ENCODE measurements at regions of chr15 and their contacts with region 1.

Region 1: GRCh38 chr15:68783226-68784058 is 37.3 kb downstream of the ANP32A start:
- DNase-seq: no peak
- H3K4me3 ChIP-seq: no peak overlapping the region
- CTCF ChIP-seq: peak; percentile 66

Region 2: DNA sequence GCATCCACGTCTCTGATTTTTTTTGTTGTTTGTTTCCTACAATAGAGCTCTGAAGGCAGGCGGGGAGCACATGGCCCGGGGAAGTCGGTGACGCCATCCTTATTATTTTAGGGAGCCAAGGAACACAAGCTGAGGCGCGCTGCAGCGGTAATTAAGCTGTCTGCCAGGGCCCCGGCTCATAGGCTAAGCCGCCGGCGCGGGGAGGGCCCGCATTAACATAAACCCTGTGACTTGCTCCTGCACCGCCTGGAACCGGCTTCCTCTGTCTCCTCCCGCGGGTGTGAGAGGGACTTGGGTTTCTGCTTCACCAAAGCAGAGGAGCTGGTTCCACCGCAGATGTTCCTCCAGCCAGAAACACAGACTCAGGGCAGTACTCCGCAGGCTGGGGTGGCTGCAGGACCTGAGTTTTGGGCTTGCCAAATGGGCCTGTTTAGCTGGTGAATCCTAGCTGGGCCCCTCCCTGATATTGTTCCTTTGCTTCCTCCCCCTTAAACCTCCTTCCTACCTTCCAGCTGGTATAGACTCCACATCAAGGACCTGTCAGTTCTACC is 11.9 kb after region 1 on chr15:
- CTCF ChIA-PET with region 1: interaction called, 19 read pairs
- POLR2A ChIA-PET with region 1: no interaction called
- DNase-seq: peak; percentile 31
- H3K4me3 ChIP-seq: no peak overlapping the region
- CTCF ChIP-seq: no peak

Region 3: DNA sequence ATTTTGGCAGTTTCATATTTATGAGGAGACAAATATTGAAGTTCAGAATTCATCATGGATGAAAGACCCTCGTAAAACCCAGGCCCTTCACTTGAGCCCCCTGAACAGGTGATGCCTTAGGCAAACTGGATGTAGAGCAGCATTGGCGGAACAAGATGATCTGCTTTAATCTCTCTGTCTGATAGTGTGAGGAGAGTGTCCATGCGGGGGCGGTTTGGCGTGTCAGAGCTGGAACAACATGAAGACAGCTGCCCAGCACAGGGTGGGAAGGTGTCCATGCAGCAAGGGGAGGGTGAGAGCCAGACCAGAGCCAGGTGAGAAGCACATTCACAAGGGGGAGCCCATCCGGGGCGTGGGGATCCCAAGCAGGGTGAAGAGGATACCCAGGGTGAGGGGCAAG is 69.0 kb after region 1 on chr15:
- CTCF ChIA-PET with region 1: no interaction called
- POLR2A ChIA-PET with region 1: no interaction called
- DNase-seq: no peak
- H3K4me3 ChIP-seq: no peak overlapping the region
- CTCF ChIP-seq: no peak

Region 4: GRCh38 chr15:69107026-69107620 is 323.7 kb after region 1 on chr15:
- CTCF ChIA-PET with region 1: no interaction called
- POLR2A ChIA-PET with region 1: no interaction called
- DNase-seq: no peak
- H3K4me3 ChIP-seq: no peak overlapping the region
- CTCF ChIP-seq: no peak